ENCODE measurements at regions of chr16 and their contacts with region 1.

Region 1: GRCh38 chr16:68022704-68023522 is at the starts of genes DDX28 and DUS2:
- DNase-seq: peak; percentile 95
- H3K4me3 Mint-ChIP-seq: peak within 1 kb of the TSS; percentile 96
- H3K27ac Mint-ChIP-seq: peak within 1 kb of the TSS; percentile 89
- H3K4me1 Mint-ChIP-seq: peaks cover 35% of the 10 kb centered on the region
- H3K27me3 Mint-ChIP-seq: no peaks in the 10 kb centered on the region
- total RNA-seq, gene DDX28: 11.6 to 12.3 TPM
- total RNA-seq, gene DUS2: 23.8 to 24.4 TPM

Region 2: GRCh38 chr16:67993189-67994039 is 29.5 kb before region 1 on chr16:
- CTCF ChIA-PET with region 1: interaction called, 16 read pairs
- POLR2A ChIA-PET with region 1: interaction called, 36 read pairs
- DNase-seq: peak; percentile 85
- H3K4me3 Mint-ChIP-seq: peak overlapping the region; percentile 71
- H3K27ac Mint-ChIP-seq: peak overlapping the region; percentile 97
- H3K4me1 Mint-ChIP-seq: peaks cover 41% of the 10 kb centered on the region
- H3K27me3 Mint-ChIP-seq: no peaks in the 10 kb centered on the region

Region 3: DNA sequence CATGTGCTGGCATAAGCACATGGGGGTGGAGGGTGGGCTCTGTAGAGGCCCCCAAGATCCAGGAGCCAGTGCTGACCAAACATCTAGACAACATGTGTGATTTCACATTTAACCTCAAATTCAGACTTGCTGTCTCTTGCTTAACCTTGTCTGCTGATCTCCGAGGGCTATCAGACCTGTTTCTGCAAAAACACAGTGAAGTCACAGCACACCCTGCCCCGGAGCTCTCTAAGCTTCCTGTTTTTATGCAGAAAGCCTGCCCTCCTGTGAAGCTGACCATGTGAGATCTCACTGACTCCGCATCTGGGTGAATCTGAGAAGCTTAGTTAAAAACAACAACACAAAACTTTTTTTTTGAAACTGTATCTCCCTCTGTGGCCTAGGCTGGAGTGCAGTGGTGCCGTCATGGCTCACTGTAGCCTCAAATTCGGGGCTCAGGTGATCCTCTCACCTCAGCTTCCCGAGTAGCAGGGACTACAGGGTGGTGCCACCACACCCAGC is 17.1 kb before region 1 on chr16:
- CTCF ChIA-PET with region 1: interaction called, 16 read pairs
- POLR2A ChIA-PET with region 1: interaction called, 42 read pairs
- DNase-seq: peak; percentile 65
- H3K4me3 Mint-ChIP-seq: no peak overlapping the region
- H3K27ac Mint-ChIP-seq: peak overlapping the region; percentile 87
- H3K4me1 Mint-ChIP-seq: peaks cover 28% of the 10 kb centered on the region
- H3K27me3 Mint-ChIP-seq: no peaks in the 10 kb centered on the region

Region 4: GRCh38 chr16:68040507-68041288 is 17.8 kb after region 1 on chr16:
- CTCF ChIA-PET with region 1: interaction called, 16 read pairs
- POLR2A ChIA-PET with region 1: interaction called, 16 read pairs
- DNase-seq: peak; percentile 91
- H3K4me3 Mint-ChIP-seq: no peak overlapping the region
- H3K27ac Mint-ChIP-seq: peak overlapping the region; percentile 74
- H3K4me1 Mint-ChIP-seq: peaks cover 29% of the 10 kb centered on the region
- H3K27me3 Mint-ChIP-seq: no peaks in the 10 kb centered on the region

Region 5: DNA sequence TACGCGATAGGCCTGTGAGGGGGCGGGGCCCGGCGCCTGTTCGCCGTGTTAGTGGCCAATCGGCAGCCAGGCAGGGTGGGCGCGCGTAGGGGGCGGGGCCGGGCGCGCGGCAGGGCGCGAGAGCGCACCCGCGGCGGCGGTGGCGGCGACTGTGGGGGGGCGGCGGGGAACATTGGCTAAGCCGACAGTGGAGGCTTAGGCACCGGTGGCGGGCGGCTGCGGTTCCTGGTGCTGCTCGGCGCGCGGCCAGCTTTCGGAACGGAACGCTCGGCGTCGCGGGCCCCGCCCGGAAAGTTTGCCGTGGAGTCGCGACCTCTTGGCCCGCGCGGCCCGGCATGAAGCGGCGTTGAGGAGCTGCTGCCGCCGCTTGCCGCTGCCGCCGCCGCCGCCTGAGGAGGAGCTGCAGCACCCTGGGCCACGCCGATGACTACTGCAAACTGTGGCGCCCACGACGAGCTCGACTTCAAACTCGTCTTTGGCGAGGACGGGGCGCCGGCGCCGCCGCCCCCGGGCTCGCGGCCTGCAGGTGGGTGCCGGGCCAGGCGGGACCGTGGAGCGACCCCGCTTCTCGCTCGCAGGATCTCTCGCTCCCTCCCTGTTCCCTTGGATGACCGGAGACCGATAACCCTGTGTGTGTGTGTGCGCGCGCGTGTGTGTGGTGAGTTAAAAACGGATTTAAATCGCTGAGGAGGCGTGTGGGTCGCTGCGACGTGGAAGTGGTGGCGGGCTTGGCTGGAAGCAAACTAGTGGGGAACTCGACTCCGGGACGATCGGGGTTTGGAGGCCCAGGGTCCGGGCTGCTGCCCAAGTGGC is 62.6 kb after region 1 on chr16 and contains the start of gene NFATC3:
- CTCF ChIA-PET with region 1: no interaction called
- POLR2A ChIA-PET with region 1: interaction called, 27 read pairs
- DNase-seq: peak; percentile 99
- H3K4me3 Mint-ChIP-seq: peak within 1 kb of the TSS; percentile 88
- H3K27ac Mint-ChIP-seq: peak within 1 kb of the TSS; percentile 95
- H3K4me1 Mint-ChIP-seq: peaks cover 61% of the 10 kb centered on the region
- H3K27me3 Mint-ChIP-seq: no peaks in the 10 kb centered on the region
- total RNA-seq, gene NFATC3: 208 to 209 TPM

Region 6: GRCh38 chr16:68760671-68761275 is 737.9 kb after region 1 on chr16:
- CTCF ChIA-PET with region 1: no interaction called
- POLR2A ChIA-PET with region 1: no interaction called
- DNase-seq: peak; percentile 39
- H3K4me3 Mint-ChIP-seq: no peak overlapping the region
- H3K27ac Mint-ChIP-seq: peak overlapping the region; percentile 23
- H3K4me1 Mint-ChIP-seq: peaks cover 68% of the 10 kb centered on the region
- H3K27me3 Mint-ChIP-seq: no peaks in the 10 kb centered on the region